PC-9 (cell line): ENCODE measurements at regions of chr17 and their contacts with region 1.

Region 1: GRCh38 chr17:72715906-72716572 is 376.4 kb downstream of the SLC39A11 start:
- DNase-seq: peak; percentile 82 to 98
- H3K4me3 ChIP-seq: peak overlapping the region; percentile 47; the same call in 1 of the 2 replicates
- H3K27ac ChIP-seq: peak overlapping the region; percentile 97
- H3K4me1 ChIP-seq: peaks cover 55% of the 10 kb centered on the region
- H3K27me3 ChIP-seq: no peaks in the 10 kb centered on the region
- CTCF ChIP-seq: no peak

Region 2: DNA sequence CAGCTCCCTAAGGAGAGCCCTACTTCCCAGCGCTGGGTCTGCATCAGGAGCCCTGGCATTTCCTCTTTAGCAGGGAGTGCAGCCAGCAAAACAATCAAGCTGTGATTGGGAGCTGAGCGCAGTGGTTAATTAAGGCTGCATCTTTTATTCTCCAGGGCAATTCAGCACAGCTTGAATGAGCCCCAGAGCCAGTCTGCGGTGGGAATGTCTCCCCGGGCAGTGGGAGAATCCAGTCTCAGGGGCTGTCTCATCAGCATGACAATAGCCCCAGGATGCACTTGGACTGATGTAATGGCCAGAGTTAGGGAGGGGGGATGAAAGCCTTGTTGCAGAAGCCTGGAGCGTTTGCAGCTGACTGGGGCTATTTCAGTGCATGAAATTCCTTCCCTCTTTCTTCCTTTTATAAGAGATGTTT is 887.9 kb before region 1 on chr17:
- CTCF ChIA-PET with region 1: no interaction called
- POLR2A ChIA-PET with region 1: no interaction called
- intact Hi-C with region 1: no loop called
- DNase-seq: no peak
- H3K4me3 ChIP-seq: no peak overlapping the region
- H3K27ac ChIP-seq: no peak overlapping the region
- H3K4me1 ChIP-seq: no peaks in the 10 kb centered on the region
- H3K27me3 ChIP-seq: no peaks in the 10 kb centered on the region
- CTCF ChIP-seq: no peak

Region 3: DNA sequence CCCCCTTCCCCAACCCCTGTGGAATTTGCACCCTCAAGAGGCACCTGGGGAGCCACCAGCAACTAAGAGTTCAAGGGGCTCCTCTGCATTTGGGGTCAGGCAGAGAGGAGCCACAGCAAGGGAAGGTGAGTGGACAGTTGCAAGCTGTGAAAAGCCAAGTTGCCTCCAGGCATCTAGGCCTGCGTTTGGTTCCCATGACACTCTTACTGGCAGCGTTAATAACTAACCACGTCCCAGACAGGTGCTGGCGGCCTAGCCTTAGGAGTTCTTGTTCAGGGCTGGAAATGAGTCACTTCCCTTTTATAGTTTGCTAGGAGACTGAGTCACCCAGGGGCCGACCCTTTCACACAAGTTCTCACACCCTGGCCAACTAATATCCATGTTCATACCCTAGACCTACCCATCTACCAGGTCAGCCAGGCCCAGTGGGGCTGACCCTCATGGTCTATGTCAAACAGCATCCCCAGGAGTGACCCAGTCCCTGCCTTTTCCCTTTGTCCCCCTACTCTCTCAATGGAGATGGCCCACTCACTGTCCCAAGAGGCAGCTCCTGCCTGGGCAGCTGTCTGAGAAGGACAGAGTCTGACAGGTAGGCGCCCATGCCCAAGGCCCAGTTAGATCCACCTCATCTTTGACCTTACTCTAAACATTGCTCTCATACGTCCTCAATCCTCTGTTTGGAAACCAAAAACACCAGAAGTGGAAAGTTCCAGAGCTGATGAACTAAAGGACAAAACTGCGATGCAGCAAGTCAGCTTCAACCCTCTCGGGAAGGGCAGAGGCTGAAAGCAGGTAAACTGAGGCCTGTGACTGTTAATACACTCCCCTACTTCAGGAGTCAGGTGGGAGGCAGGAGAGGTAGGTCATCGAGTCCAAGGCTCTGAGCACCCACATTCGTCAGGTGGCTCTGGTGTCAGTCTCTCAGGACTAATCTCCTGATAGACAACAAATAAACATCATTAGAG is 294.6 kb before region 1 on chr17:
- CTCF ChIA-PET with region 1: no interaction called
- POLR2A ChIA-PET with region 1: no interaction called
- intact Hi-C with region 1: loop called (anchors 2 kb)
- DNase-seq: peak; percentile 90 to 99
- H3K4me3 ChIP-seq: peak overlapping the region; percentile 56; the same call in 1 of the 2 replicates
- H3K27ac ChIP-seq: peak overlapping the region; percentile 98
- H3K4me1 ChIP-seq: peaks cover 66% of the 10 kb centered on the region
- H3K27me3 ChIP-seq: no peaks in the 10 kb centered on the region
- CTCF ChIP-seq: no peak

Region 4: GRCh38 chr17:72556944-72557826 is 158.9 kb before region 1 on chr17:
- CTCF ChIA-PET with region 1: interaction called, 4 read pairs
- POLR2A ChIA-PET with region 1: no interaction called
- intact Hi-C with region 1: loop called (anchors 2 kb)
- DNase-seq: peak; percentile 47 to 61
- H3K4me3 ChIP-seq: no peak overlapping the region
- H3K27ac ChIP-seq: no peak overlapping the region
- H3K4me1 ChIP-seq: peaks cover 14% of the 10 kb centered on the region; the same call in 1 of the 2 replicates
- H3K27me3 ChIP-seq: no peaks in the 10 kb centered on the region
- CTCF ChIP-seq: peak; percentile 85

Region 5: DNA sequence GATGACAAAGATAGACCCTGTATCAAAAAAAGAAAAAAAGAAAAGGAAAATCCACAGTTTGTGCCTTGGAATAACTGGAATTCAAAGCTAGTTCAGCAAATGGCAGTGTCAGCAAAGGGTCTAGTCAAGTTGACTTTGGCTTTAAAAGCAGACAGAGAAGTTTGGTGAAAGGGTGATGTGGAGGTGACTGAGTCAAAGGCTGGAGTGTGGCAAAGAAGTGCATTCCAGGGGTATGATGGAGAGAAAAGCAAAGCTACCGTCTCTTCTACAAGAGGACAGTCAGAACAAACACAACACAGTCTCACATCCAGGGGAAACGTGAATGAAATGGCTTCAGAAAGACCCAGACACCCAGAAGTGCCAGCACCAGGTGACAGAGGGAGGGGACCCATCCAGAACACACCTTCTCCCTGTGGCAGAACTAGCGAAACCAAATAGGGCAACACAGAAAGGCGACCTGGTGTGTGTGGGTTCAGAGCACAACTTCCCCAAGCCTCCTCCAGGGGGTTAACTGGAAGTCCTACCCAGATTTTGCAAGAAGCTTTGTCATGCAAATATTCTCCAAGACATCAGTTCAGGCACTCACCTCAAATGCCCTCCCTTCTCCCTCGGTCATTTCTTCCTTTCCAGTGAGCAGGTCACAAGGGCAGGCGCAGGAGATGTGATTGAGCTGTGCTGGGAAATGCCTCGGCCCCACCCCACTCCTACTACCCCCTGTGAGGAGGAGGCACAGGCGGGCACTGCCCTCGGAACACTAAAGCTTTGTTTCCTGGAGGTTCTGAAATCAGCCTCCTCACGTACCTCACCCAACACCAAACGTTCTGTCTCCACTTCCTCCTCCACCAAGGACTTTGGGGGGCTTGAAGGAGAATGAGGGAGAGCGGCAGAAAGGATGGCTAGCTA is 113.3 kb before region 1 on chr17:
- CTCF ChIA-PET with region 1: no interaction called
- POLR2A ChIA-PET with region 1: no interaction called
- intact Hi-C with region 1: loop called (anchors 2 kb)
- DNase-seq: peak; percentile 81 to 96
- H3K4me3 ChIP-seq: peak overlapping the region; percentile 40
- H3K27ac ChIP-seq: peak overlapping the region; percentile 87
- H3K4me1 ChIP-seq: peaks cover 53% of the 10 kb centered on the region
- H3K27me3 ChIP-seq: no peaks in the 10 kb centered on the region
- CTCF ChIP-seq: peak; percentile 56

Region 6: DNA sequence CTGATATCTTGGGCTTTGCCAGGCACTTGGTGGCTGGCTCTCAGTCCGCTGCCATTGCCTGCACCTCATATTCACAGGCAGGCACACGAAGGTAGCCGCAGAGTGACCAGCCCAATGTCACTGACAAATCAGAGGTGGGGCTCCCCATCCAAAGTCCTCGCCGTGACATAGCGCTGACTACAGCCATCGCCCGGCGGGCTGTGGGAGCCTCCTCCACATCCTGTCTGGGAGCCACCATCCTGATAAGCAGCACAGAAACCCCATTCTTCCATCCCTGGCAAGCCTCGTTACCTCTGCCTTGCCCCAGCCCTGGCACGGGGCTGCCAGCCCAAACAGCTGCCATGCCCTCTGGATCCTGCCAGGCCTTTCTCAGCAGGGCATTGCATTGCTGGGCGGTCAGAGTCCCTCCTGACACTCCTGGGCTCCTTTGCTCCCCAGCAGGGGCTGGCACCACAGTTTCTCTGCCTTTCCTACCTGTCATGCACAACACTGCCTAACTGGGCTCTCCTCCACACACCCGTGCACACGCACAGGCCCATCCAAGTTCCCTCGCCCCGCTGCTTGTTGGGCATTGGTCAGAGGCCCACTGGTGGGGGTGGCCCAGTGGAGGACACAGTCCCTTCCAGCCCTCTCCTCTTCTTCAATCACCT is 61.2 kb before region 1 on chr17:
- CTCF ChIA-PET with region 1: no interaction called
- POLR2A ChIA-PET with region 1: no interaction called
- intact Hi-C with region 1: no loop called
- DNase-seq: no peak
- H3K4me3 ChIP-seq: no peak overlapping the region
- H3K27ac ChIP-seq: no peak overlapping the region
- H3K4me1 ChIP-seq: peaks cover 19% of the 10 kb centered on the region; the same call in 1 of the 2 replicates
- H3K27me3 ChIP-seq: no peaks in the 10 kb centered on the region
- CTCF ChIP-seq: no peak

Region 7: GRCh38 chr17:72683506-72684404 is 32.3 kb before region 1 on chr17:
- CTCF ChIA-PET with region 1: interaction called, 3 read pairs
- POLR2A ChIA-PET with region 1: interaction called, 22 read pairs
- intact Hi-C with region 1: loop called (anchors 1 kb)
- DNase-seq: peak; percentile 92 to 100
- H3K4me3 ChIP-seq: peak overlapping the region; percentile 34; the same call in 1 of the 2 replicates
- H3K27ac ChIP-seq: peak overlapping the region; percentile 86
- H3K4me1 ChIP-seq: peaks cover 62% of the 10 kb centered on the region
- H3K27me3 ChIP-seq: no peaks in the 10 kb centered on the region
- CTCF ChIP-seq: no peak